ENCODE measurements at regions of chr11 and their contacts with region 1.

Region 1: GRCh38 chr11:124415356-124415923 is 9.2 kb downstream of the OR8B4 start:
- DNase-seq: peak in 1 of 2 experiments; percentile 39
- H3K4me3 ChIP-seq: no peak overlapping the region
- H3K27ac ChIP-seq: no peak overlapping the region
- H3K4me1 ChIP-seq: no peaks in the 10 kb centered on the region
- H3K27me3 ChIP-seq: peaks cover 5% of the 10 kb centered on the region
- CTCF ChIP-seq: peak; percentile 72

Region 2: DNA sequence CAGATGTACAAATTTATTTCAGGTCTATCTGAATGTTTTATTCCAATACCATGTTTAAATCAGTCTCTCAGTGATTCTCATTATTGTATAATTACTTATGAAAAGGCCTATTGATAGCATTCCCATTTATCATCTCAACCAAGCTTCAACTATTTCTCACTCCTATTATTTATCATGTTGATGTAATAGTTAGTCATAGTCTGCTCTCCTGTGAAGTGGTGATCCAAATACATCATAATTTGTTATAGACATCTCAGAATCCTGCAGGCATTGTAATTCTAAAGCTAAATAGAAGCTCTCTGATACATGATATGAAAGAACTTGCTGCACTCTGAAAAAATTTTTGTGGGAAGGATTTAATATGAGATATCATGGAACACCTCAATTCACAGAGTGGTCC is 196.3 kb before region 1 on chr11:
- CTCF ChIA-PET with region 1: no interaction called
- POLR2A ChIA-PET with region 1: no interaction called
- intact Hi-C with region 1: no loop called
- DNase-seq: no peak
- H3K4me3 ChIP-seq: no peak overlapping the region
- H3K27ac ChIP-seq: no peak overlapping the region
- H3K4me1 ChIP-seq: no peaks in the 10 kb centered on the region
- H3K27me3 ChIP-seq: no peaks in the 10 kb centered on the region
- CTCF ChIP-seq: no peak

Region 3: DNA sequence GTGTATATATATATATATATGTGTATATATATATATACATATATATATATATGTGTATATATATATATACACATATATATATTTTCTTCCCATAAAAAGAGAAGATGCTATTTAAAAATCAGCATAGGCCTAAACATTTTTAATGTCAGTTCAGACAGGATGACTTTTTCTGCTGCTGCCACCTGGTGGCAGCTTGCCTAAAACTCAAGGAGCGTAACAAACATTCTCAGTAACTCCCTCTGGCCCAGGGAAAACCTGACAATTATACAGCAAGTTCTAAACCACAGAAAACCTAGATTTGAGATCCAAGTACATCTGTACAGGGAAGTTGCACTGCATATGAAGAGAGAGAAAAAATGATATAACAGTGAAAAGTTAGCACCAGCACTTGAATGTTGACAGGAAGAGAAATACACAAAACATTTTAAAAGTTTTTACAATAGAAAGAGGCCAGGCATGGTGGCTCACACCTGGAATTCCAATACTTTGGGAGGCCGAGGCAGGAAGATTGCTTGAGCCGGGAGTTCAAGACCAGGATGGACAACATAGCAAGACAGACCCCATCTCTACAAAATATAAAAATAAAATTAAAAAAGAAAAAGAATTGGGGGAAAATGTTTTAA is 170.9 kb after region 1 on chr11:
- CTCF ChIA-PET with region 1: no interaction called
- POLR2A ChIA-PET with region 1: no interaction called
- intact Hi-C with region 1: loop called (anchors 1 kb)
- DNase-seq: peak in 1 of 2 experiments; percentile 34
- H3K4me3 ChIP-seq: no peak overlapping the region
- H3K27ac ChIP-seq: no peak overlapping the region
- H3K4me1 ChIP-seq: no peaks in the 10 kb centered on the region
- H3K27me3 ChIP-seq: peaks cover 42% of the 10 kb centered on the region
- CTCF ChIP-seq: peak; percentile 73

Region 4: DNA sequence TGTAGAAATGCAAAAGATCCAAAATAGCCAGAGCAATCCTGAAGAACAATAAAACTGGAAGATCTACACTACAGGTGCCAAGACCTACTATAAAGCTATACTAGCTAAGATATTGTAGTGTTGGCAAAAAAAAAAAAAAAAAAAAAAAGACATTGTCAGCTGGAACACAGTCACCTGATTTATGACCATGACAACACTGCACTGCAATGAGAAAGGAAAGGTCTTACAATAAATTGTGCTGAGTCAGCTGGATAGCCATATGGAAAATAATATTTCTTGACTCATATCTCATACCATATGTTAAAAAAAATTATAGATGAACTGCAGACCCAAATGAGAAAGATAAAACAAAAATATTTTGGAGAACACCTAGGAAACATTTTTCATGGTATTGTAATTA is 192.7 kb after region 1 on chr11:
- CTCF ChIA-PET with region 1: no interaction called
- POLR2A ChIA-PET with region 1: interaction called, 16 read pairs
- intact Hi-C with region 1: no loop called
- DNase-seq: no peak
- H3K4me3 ChIP-seq: no peak overlapping the region
- H3K27ac ChIP-seq: no peak overlapping the region
- H3K4me1 ChIP-seq: no peaks in the 10 kb centered on the region
- H3K27me3 ChIP-seq: peaks cover 5% of the 10 kb centered on the region; the same call in 1 of the 2 replicates
- CTCF ChIP-seq: no peak

Measured in PC-9 (cell line).